ENCODE measurements at regions of chr7 and their contacts with region 1.

Region 1: DNA sequence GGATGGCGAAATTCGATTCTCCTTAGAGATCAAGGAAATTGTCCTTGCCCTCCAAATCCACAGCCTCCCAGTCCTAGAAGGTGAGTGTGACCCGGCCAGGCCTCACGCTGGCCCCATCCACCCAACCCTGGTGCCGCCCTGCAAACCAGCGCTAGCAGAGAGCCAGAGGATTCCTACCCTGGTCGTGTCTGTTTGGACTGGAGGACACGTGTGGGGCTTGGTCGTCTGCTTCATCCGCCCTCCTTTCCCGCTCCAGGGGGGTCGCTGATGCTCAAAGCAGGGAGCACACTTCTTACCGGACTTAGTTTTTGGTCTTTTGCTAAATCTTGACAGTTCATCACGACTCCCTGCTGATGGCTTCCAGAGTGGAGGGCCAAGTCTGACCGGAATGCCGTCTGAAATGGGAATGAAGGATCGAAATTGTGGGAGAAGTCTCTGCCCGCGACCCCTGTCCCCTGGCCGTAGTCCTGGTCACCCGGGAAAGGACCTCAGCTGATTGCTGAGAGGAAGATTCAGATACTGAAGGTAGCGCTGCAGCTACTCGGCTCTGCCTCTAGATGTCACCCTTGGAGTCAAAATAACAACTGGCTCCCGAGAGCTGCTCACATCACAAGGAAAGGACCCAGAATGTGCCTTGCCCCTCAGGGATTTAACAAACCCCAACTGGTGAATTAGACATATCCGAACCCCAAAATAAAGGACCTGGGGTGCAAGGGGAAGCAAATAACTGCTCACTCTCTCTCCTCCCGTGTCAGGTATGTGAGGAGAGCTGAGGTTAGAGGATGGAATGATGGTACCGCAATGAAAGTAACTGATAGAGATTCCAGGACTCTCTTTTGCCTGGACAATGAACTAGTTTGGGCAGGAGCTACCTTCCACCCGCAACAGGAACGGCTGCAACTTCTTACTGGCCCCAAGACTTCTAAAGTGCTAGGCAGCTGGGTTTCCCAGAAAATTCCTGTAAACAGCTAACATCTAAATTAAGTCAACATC is 23.5 kb upstream of the ORC5 start:
- DNase-seq: peak in 2 of 3 donors; percentile 28 to 39
- ATAC-seq: peak; percentile 67 to 74
- H3K4me3 ChIP-seq: no peak overlapping the region
- H3K27ac ChIP-seq: no peak overlapping the region
- H3K4me1 ChIP-seq: no peaks in the 10 kb centered on the region
- H3K27me3 ChIP-seq: no peaks in the 10 kb centered on the region

Region 2: DNA sequence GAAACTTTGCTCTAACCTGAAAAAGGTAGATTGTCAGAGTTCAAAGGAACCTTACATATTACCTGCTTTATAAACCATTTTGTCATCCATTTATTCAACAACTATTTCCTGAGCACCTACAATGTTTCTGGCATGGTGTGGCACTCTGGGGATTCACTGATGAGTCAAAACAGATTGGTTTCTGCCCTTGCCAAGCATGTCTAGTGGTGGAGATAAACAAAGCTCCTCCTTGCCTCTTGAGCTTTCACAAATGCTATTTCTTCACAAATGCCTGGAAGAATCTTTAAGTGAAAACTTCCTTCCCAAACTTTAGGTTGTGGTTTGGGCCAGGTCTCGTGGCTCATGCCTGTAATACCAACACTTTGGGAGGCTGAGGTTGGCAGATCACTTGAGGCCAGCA is 156.8 kb before region 1 on chr7:
- intact Hi-C with region 1: no loop called
- DNase-seq: no peak
- ATAC-seq: no peak
- H3K4me3 ChIP-seq: no peak overlapping the region
- H3K27ac ChIP-seq: no peak overlapping the region
- H3K4me1 ChIP-seq: no peaks in the 10 kb centered on the region
- H3K27me3 ChIP-seq: no peaks in the 10 kb centered on the region

Region 3: DNA sequence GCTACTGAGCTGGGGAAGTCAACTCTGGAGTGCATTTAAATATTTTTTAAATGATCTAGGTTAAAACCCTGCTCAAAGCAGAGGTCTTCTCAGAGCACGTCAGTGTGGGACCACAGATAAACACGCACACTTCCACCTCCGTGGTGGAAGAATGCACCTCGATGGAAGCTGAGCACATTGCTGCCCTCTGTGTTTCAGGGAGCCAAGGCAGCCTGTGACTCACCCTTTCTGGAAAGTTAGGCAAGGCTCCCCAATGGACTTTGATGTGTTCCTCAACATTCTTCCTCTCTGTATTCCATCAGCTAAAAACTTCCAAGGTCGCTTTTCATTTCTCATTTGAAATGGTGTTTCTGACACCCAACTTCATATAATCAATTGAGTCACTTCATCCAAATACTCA is 611.8 kb after region 1 on chr7:
- intact Hi-C with region 1: loop called in 1 of 4 experiments (anchors 5 kb)
- DNase-seq: no peak
- ATAC-seq: no peak
- H3K4me3 ChIP-seq: no peak overlapping the region
- H3K27ac ChIP-seq: no peak overlapping the region
- H3K4me1 ChIP-seq: no peaks in the 10 kb centered on the region
- H3K27me3 ChIP-seq: no peaks in the 10 kb centered on the region

Region 4: GRCh38 chr7:104923010-104923421 is 691.7 kb after region 1 on chr7:
- intact Hi-C with region 1: loop called in 1 of 4 experiments (anchors 5 kb)
- DNase-seq: peak; percentile 73 to 85 (median 78)
- ATAC-seq: peak; percentile 89 to 92
- H3K4me3 ChIP-seq: no peak overlapping the region
- H3K27ac ChIP-seq: peak overlapping the region; percentile 26
- H3K4me1 ChIP-seq: peaks cover 2% of the 10 kb centered on the region
- H3K27me3 ChIP-seq: no peaks in the 10 kb centered on the region